ENCODE measurements at regions of chr6 and their contacts with region 1.

Region 1: GRCh38 chr6:5764401-5764955 is 242.2 kb downstream of the NRN1 start:
- DNase-seq: peak in 4 of 5 donors; percentile 69 to 85 (median 78)
- ATAC-seq: peak; percentile 91 to 92 (median 92)
- H3K4me3 ChIP-seq: peak overlapping the region in 2 of 12 donors; percentile 21 to 24
- H3K27ac ChIP-seq: peak overlapping the region; percentile 67 to 94 (median 84)
- H3K4me1 ChIP-seq: peaks cover 0 to 53% (median 25%) of the 10 kb centered on the region in 12 donors
- H3K27me3 ChIP-seq: no peaks in the 10 kb centered on the region
- CTCF ChIP-seq: peak in 3 of 12 donors; percentile 4 to 25 (median 20)
- POLR2A ChIP-seq: no peak

Region 2: GRCh38 chr6:5584078-5584482 is 180.4 kb before region 1 on chr6:
- intact Hi-C with region 1: loop called in 1 of 10 experiments (anchors 5 kb)
- DNase-seq: no peak
- ATAC-seq: no peak
- H3K4me3 ChIP-seq: no peak overlapping the region
- H3K27ac ChIP-seq: no peak overlapping the region
- H3K4me1 ChIP-seq: peaks cover 0 to 4% (median 0%) of the 10 kb centered on the region in 12 donors
- H3K27me3 ChIP-seq: no peaks in the 10 kb centered on the region
- CTCF ChIP-seq: no peak
- POLR2A ChIP-seq: no peak

Region 3: DNA sequence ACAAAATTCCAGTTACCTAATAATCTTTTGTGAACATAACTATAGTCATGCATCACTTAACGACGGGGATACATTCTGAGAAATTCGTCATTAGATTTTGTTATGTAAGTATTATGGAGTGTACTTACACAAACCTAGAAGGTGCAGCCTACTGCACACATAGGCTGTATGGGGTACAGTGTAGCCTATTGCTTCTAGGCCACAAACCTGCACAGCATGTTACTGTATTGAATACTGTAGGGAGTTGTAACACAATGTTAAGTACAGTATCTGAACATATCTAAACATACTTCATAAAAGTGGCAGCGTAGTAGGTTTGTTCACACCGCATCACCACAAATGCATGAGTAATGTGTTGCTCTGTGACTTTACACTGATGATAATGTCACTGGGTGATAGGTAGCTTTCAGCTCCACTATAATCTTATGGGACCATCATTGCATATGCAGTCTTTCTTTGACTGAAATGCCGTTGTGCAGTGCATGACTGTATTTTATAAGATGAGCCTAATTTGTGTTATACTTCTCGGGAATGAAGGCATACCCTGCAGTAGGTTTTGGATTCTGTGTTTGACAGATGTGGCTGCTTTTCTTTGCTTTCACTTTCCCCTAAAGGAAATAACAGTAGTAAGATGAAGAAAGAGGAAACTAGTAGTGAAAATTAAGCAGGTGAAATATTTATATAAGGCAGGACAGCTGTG is 137.6 kb before region 1 on chr6:
- intact Hi-C with region 1: loop called in 3 of 10 experiments (anchors 1 to 10 kb)
- DNase-seq: no peak
- ATAC-seq: no peak
- H3K4me3 ChIP-seq: no peak overlapping the region
- H3K27ac ChIP-seq: no peak overlapping the region
- H3K4me1 ChIP-seq: peaks cover 0 to 37% (median 7%) of the 10 kb centered on the region in 12 donors
- H3K27me3 ChIP-seq: no peaks in the 10 kb centered on the region
- CTCF ChIP-seq: no peak
- POLR2A ChIP-seq: no peak

Region 4: DNA sequence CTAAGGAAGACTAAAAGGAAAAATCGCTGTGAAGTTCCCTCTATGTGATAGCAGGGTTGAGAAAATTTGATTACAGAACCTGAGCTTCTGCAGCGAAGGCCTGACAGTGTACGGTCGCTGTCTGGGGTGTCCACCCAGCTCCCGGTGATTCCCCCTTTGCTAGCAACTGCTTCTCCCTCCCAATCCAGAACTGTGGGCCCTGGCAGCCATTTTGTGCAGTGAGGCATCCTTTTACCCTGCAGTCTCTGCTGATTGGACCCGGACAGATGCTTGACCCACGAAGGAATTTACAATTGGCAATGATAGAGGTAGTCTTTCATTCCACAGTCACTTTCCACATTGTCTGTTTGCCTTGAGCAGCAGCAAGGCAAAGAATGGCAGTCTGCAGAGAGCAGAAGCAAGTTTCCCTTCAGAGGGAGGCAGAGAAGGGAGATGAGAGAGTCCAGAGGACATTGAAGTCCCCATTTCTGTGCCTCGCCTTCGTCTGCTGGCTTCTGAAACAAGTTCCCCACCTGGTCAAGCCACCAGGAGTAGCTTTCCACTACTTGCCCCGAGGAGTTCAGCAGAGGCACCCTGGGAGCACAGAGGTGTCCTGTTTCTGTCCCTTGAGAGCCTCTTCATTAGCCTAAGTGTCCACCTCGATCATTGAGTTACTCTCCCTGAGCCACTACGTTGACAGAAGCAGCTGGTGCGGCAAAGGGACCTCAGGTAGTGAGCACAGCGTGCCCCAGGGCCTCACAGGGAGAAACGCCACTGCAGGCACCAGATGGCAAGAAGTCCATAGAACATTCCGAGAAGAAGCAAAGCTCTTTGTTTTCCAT is 128.1 kb before region 1 on chr6:
- intact Hi-C with region 1: loop called in 1 of 10 experiments (anchors 5 kb)
- DNase-seq: no peak
- ATAC-seq: no peak
- H3K4me3 ChIP-seq: no peak overlapping the region
- H3K27ac ChIP-seq: no peak overlapping the region
- H3K4me1 ChIP-seq: peaks cover 0 to 21% (median 0%) of the 10 kb centered on the region in 12 donors
- H3K27me3 ChIP-seq: no peaks in the 10 kb centered on the region
- CTCF ChIP-seq: no peak
- POLR2A ChIP-seq: no peak

Region 5: DNA sequence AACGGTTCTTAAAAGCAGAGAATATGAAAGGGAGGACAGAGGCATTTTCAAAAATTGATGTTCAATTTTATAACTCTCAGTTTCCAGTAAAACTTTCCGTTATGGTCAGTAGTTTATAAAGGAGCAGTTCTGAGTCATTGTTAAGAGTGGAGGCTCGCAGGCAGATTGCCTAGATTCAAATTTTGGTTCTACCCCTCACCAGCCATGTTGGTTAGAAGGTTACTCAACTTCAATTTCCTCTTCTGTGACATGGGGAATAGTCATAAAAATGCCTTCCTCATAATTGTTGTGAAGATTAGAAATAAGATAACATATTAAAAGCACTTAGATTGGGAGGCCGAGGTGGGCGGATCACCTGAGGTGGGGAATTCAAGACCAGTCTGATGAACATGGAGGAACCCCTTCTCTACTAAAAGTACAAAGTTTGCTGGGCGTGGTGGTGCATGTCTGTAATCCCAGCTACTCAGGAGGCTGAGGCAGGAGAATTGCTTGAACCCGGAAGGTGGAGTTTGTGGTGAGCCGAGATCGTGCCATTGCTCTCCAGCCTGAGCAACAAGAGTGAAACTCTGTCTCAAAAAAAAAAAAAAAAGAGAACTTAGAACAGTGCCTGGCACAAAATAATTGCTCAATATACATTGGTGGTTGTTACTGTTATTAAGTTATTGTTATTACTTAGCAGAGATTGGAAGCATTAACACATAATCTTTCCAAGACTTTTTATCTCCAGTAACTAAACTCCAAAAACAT is 106.6 kb before region 1 on chr6:
- intact Hi-C with region 1: no loop called
- DNase-seq: no peak
- ATAC-seq: no peak
- H3K4me3 ChIP-seq: no peak overlapping the region
- H3K27ac ChIP-seq: peak overlapping the region in 1 of 12 donors; percentile 66
- H3K4me1 ChIP-seq: peaks cover 0 to 7% (median 0%) of the 10 kb centered on the region in 12 donors
- H3K27me3 ChIP-seq: no peaks in the 10 kb centered on the region
- CTCF ChIP-seq: no peak
- POLR2A ChIP-seq: no peak

Region 6: DNA sequence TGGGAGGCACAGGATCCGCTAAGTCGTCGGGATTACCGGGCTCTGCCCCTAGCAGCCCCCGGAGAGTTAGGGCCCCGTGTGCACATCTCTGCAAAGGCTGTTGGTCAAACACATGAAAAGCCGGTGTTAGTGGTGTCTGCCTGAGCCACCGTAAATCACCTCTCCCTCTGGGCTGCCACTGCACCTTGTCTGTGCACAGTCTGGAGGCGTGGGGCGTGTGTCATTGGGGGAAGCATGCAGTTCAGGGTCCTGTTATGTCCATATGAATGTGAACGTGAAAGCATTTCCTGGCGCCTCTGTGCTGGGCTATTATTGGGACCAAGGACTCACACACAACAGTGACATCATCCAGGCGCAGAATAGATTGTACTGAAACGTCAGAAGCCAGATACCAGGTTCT is 63.3 kb before region 1 on chr6:
- intact Hi-C with region 1: loop called in 1 of 10 experiments (anchors 2 kb)
- DNase-seq: peak in 4 of 5 donors; percentile 50 to 85 (median 62)
- ATAC-seq: peak; percentile 95 to 97 (median 96)
- H3K4me3 ChIP-seq: no peak overlapping the region
- H3K27ac ChIP-seq: peak overlapping the region in 6 of 12 donors; percentile 20 to 69 (median 50)
- H3K4me1 ChIP-seq: peaks cover 0 to 44% (median 0%) of the 10 kb centered on the region in 12 donors
- H3K27me3 ChIP-seq: no peaks in the 10 kb centered on the region
- CTCF ChIP-seq: no peak
- POLR2A ChIP-seq: no peak

Region 7: DNA sequence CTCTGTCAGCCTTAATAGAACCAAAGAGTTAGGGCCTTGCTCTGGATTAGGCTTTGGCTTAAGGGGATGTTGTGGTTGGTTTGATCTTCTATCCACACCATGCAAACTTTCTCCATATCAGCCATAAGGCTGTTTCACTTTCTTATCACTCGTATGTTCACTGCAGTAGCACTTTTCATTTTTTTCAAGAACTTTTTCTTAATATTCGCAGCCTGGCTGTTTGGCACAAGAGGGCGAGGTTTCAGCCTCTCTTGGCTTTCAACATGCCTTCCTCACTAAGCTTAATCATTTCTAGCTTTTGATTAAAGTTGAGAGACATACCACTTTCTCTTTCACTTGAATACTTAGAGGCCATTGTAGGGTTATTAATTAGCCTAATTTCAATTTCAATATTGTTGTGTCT is 49.1 kb after region 1 on chr6:
- intact Hi-C with region 1: no loop called
- DNase-seq: no peak
- ATAC-seq: no peak
- H3K4me3 ChIP-seq: no peak overlapping the region
- H3K27ac ChIP-seq: no peak overlapping the region
- H3K4me1 ChIP-seq: no peaks in the 10 kb centered on the region
- H3K27me3 ChIP-seq: no peaks in the 10 kb centered on the region
- CTCF ChIP-seq: no peak
- POLR2A ChIP-seq: no peak

Measured in heart left ventricle (tissue), 16 donors.